Left cardiac atrium (tissue), 4 donors: ENCODE measurements at regions of chr18 and their contacts with region 1.

Region 1: GRCh38 chr18:36274083-36274715 is 23.3 kb upstream of the FHOD3 start:
- DNase-seq: no peak
- ATAC-seq: no peak

Region 2: GRCh38 chr18:36023336-36023735 is 250.9 kb before region 1 on chr18:
- intact Hi-C with region 1: loop called in 1 of 2 experiments (anchors 5 kb)
- DNase-seq: no peak
- ATAC-seq: no peak

Region 3: GRCh38 chr18:36203360-36203895 is 70.8 kb before region 1 on chr18:
- intact Hi-C with region 1: loop called in 1 of 2 experiments (anchors 10 kb)
- DNase-seq: no peak
- ATAC-seq: no peak